Panc1 (cell line): ENCODE measurements at regions of chr9 and their contacts with region 1.

Region 1: DNA sequence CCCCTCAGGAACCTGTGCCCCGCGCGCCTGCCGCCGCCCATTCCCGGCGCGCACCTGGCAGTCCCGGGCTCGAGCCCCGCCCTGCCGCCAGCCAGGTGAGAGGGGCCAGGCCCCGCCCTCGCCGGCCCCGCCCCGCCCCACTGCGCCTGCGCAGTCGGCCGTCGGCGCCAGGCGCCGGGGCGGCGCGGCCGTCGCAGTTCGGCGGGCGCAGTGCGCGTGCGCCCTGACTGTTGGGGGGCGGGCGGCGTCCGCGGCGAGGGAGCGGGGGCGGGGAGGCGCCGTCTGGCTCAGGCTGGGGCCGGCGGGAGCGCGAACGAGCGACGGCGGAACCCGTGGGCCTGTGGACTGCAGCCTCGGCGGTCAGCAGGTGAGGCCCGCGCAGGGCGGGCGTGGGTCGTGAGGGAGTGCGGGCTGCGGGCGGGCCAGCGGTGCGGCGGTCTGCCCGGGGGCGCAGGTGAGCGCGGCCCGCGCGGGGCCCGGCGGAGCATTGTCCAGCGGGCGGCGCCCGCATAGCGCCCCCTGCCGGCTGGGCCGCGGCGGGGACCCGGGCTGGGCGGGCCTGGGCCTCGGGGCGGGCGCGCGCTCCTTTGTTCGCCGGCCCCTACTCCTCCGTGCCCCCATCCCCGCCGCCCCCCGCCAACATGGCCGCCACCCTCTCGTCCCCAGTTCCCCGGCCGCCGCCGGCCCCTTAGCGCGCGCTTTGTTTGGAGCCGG is at the start of gene SPIN1:
- DNase-seq: no peak
- ATAC-seq: peak; percentile 95
- H3K4me3 ChIP-seq: peak within 1 kb of the TSS; percentile 72 to 87
- H3K27ac ChIP-seq: peak within 1 kb of the TSS; percentile 95
- H3K4me1 ChIP-seq: peaks cover 21% of the 10 kb centered on the region; the same call in 1 of the 2 replicates
- H3K27me3 ChIP-seq: no peaks in the 10 kb centered on the region
- CTCF ChIP-seq: peak; percentile 88
- total RNA-seq, gene SPIN1: 76.9 TPM

Region 2: DNA sequence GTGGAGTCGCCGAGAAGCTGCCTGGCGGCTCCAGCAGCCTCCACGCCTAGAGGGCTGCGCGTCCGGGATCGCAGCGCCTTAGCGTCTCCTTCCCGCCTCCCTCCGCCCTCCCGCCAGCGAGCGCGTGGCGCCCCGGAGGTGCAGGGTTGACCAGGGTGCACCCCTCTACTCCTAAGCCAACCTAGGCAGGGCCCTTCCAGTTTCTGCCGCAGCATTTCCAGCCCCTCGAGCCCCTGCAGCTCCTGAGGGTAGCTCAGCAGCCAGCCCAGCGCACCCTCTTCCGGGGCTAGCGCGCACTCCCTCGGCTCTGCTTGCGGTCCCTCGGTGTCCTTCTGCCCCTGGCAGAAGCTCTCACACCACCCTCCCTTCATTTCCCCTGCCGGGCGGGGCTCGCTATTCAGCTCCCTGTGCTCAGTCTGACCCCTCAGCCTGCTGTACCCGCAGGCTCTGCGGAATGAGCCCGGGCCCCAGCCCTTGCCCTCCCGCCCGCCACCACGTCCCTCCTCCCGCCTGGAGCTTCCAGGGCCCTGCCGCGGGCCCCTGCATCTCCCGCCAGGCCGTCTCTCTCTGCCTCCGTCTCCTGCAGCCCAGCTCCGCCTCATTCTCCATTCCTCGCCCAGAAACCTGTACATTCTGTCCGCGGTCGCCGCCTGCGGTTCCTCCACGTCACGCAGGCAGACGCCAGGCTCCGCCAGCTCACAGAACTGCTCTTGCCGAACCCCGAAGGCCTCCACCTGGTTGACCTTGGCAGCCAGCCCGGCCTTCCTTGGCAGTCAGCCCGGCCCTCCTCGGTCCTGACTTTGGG is 311.8 kb before region 1 on chr9:
- CTCF ChIA-PET with region 1: no interaction called
- POLR2A ChIA-PET with region 1: no interaction called
- in situ Hi-C with region 1: no loop called
- intact Hi-C with region 1: loop called (anchors 10 kb)
- DNase-seq: no peak
- ATAC-seq: peak; percentile 87
- H3K4me3 ChIP-seq: peak overlapping the region; percentile 50 to 62
- H3K27ac ChIP-seq: peak overlapping the region; percentile 92
- H3K4me1 ChIP-seq: peaks cover 21% of the 10 kb centered on the region
- H3K27me3 ChIP-seq: no peaks in the 10 kb centered on the region
- CTCF ChIP-seq: peak; percentile 49

Region 3: DNA sequence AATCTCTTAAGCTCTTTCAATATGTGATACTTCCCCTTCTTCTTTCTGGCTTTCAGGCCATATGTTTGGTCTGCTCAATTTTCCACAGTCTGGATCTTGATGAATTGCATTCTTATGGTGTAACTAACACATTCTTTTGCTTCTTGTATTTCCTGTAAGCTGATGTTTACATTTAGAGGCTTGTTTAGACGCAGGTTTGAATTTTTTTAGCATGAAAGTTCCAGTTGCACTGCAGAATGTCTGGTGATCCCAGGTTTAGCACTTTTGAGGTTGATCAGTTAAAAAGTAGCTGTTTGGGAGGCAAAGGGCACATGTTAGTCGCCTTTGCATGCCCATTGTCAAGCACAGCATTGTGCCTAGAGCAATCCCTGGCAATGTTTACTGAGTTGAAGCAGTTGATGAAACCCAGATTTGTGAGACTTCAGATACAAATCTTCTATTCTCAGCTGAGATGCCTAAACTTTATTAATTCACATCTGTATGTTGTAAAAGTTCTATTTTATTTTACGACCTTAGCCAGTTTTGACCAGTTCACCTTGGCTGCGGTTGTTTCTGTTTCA is 190.5 kb before region 1 on chr9:
- CTCF ChIA-PET with region 1: no interaction called
- POLR2A ChIA-PET with region 1: no interaction called
- in situ Hi-C with region 1: no loop called
- intact Hi-C with region 1: loop called (anchors 10 kb)
- DNase-seq: peak; percentile 51
- ATAC-seq: peak; percentile 94
- H3K4me3 ChIP-seq: peak overlapping the region; percentile 7 to 42; a peak in 2 of 4 replicates
- H3K27ac ChIP-seq: peak overlapping the region; percentile 97
- H3K4me1 ChIP-seq: peaks cover 21% of the 10 kb centered on the region
- H3K27me3 ChIP-seq: no peaks in the 10 kb centered on the region
- CTCF ChIP-seq: no peak